Activated CD8-positive, alpha-beta T cell treated with anti-CD3 and anti-CD28 coated beads, Interleukin-2, amount 10 ng/mL, durations not matched to agents 7 days and 5 days (primary cell): ENCODE measurements at regions of chr1 and their contacts with region 1.

Region 1: DNA sequence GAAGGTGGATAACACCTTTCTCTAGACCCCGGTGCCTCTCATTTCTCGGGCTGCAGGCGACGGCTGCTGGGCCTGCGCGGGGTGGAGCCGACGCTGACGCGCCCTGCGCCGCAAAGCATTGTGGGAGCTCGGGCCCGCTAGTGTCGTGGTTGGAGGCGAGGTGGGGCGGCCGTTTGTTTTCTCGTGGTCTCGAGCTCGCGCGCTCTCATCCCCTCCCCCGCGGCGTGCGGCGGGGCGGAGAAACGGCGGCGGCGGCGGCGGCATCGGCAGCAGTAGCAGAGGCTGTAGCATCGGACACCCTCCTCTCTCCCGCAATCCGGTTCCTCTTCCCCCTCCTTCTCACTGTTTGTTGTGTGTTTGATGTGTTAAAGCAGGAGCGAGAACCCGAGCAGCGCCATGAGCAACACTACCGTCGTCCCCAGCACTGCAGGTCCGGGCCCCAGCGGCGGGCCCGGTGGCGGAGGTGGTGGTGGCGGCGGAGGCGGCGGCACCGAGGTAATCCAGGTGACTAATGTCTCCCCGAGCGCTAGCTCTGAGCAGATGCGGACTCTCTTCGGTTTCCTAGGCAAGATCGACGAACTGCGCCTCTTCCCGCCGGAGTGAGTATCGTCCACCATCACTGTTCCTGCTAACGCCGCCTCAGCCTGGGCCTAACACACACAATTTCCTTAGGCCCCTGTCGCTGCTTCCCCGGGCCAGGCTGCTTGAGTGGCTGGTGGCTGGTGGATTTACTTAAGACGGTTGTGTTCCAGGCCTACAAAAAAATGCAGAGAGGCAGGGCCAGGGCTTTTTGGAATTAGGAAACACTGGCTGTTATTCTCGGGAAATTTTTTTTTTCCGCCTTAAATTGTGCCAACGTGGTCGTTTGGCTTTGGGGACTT is at the start of gene SRSF11:
- DNase-seq: peak; percentile 97
- ATAC-seq: peak; percentile 96
- H3K4me3 Mint-ChIP-seq: peak within 1 kb of the TSS; percentile 93
- H3K27ac Mint-ChIP-seq: peak within 1 kb of the TSS; percentile 97
- H3K4me1 Mint-ChIP-seq: peaks cover 44% of the 10 kb centered on the region
- H3K27me3 Mint-ChIP-seq: no peaks in the 10 kb centered on the region
- total RNA-seq, gene SRSF11: 165 to 169 TPM

Region 2: DNA sequence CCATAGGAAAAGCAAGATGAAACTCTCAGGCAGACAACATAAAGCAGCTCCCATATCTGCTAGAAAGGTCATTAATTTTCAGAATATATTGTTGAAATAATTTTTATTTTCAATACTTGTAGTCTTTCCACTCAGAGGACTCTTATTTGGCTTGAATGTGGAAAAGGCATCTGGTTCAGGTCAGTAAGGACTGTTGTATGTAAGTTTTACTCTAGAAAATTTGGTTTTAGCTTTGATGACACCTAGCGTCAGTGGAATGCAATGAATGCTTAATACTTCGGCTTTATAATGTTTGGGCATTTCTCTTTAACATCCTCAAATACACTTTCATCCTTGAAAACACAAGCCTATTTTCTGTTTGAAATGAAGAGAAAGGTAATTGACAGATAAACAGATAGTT is 79.4 kb before region 1 on chr1:
- CTCF ChIA-PET with region 1: no interaction called
- POLR2A ChIA-PET with region 1: no interaction called
- DNase-seq: no peak
- ATAC-seq: no peak
- H3K4me3 Mint-ChIP-seq: no peak overlapping the region
- H3K27ac Mint-ChIP-seq: no peak overlapping the region
- H3K4me1 Mint-ChIP-seq: no peaks in the 10 kb centered on the region
- H3K27me3 Mint-ChIP-seq: peaks cover 4% of the 10 kb centered on the region

Region 3: GRCh38 chr1:70169018-70169839 is 52.3 kb before region 1 on chr1:
- CTCF ChIA-PET with region 1: no interaction called
- POLR2A ChIA-PET with region 1: no interaction called
- DNase-seq: no peak
- ATAC-seq: no peak
- H3K4me3 Mint-ChIP-seq: no peak overlapping the region
- H3K27ac Mint-ChIP-seq: no peak overlapping the region
- H3K4me1 Mint-ChIP-seq: no peaks in the 10 kb centered on the region
- H3K27me3 Mint-ChIP-seq: no peaks in the 10 kb centered on the region

Region 4: GRCh38 chr1:70205434-70206118 is 15.9 kb before region 1 on chr1 and contains the start of gene LRRC40:
- CTCF ChIA-PET with region 1: interaction called, 8 read pairs
- POLR2A ChIA-PET with region 1: interaction called, 92 read pairs
- DNase-seq: peak; percentile 97
- ATAC-seq: peak; percentile 96
- H3K4me3 Mint-ChIP-seq: peak within 1 kb of the TSS; percentile 99
- H3K27ac Mint-ChIP-seq: peak within 1 kb of the TSS; percentile 100
- H3K4me1 Mint-ChIP-seq: peaks cover 60% of the 10 kb centered on the region
- H3K27me3 Mint-ChIP-seq: no peaks in the 10 kb centered on the region
- total RNA-seq, gene LRRC40: 22.5 to 22.7 TPM

Region 5: GRCh38 chr1:70354332-70355110 is 133.0 kb after region 1 on chr1 and contains the start of gene ANKRD13C:
- CTCF ChIA-PET with region 1: no interaction called
- POLR2A ChIA-PET with region 1: interaction called, 29 read pairs
- DNase-seq: peak; percentile 95
- ATAC-seq: peak; percentile 91
- H3K4me3 Mint-ChIP-seq: peak within 1 kb of the TSS; percentile 91
- H3K27ac Mint-ChIP-seq: peak within 1 kb of the TSS; percentile 93
- H3K4me1 Mint-ChIP-seq: peaks cover 37% of the 10 kb centered on the region
- H3K27me3 Mint-ChIP-seq: no peaks in the 10 kb centered on the region
- total RNA-seq, gene ANKRD13C: 25.0 to 26.8 TPM

Region 6: GRCh38 chr1:70475023-70475422 is 253.5 kb after region 1 on chr1:
- CTCF ChIA-PET with region 1: no interaction called
- POLR2A ChIA-PET with region 1: no interaction called
- DNase-seq: no peak
- ATAC-seq: no peak
- H3K4me3 Mint-ChIP-seq: no peak overlapping the region
- H3K27ac Mint-ChIP-seq: no peak overlapping the region
- H3K4me1 Mint-ChIP-seq: no peaks in the 10 kb centered on the region
- H3K27me3 Mint-ChIP-seq: peaks cover 6% of the 10 kb centered on the region